ENCODE measurements at regions of chr12 and their contacts with region 1.

Region 1: DNA sequence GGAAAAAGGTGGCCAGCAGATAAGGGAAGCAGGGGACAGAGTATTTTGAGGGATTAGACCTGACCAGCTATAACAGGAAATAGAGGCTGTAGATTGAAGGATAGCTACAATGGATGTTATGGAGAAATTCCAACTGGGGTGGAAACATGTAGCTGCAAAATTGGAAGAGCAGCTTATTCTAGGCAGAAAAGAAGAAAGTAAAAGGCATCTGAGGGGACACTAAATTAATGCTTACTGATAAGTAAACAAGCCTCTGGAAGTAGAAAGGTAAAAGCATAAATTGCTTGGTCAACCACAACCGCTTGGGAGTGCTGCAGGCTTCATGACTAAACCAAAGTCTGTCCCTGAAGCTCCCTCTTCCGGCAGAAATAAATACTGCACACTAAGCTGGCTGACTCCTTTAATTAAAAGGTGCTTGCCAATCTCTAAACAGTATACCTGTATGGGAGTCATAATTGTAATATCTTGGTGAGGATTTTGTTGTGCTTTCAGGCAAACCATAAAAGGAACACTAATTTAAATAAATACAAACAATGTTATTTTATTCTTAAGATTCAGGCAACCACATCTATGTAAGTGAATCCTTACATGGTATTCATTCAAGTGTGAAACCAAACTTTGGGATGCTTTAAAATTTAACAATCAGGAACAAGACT is 7.7 kb downstream of the UBC start:
- DNase-seq: peak; percentile 56 to 98 (median 90)

Region 2: DNA sequence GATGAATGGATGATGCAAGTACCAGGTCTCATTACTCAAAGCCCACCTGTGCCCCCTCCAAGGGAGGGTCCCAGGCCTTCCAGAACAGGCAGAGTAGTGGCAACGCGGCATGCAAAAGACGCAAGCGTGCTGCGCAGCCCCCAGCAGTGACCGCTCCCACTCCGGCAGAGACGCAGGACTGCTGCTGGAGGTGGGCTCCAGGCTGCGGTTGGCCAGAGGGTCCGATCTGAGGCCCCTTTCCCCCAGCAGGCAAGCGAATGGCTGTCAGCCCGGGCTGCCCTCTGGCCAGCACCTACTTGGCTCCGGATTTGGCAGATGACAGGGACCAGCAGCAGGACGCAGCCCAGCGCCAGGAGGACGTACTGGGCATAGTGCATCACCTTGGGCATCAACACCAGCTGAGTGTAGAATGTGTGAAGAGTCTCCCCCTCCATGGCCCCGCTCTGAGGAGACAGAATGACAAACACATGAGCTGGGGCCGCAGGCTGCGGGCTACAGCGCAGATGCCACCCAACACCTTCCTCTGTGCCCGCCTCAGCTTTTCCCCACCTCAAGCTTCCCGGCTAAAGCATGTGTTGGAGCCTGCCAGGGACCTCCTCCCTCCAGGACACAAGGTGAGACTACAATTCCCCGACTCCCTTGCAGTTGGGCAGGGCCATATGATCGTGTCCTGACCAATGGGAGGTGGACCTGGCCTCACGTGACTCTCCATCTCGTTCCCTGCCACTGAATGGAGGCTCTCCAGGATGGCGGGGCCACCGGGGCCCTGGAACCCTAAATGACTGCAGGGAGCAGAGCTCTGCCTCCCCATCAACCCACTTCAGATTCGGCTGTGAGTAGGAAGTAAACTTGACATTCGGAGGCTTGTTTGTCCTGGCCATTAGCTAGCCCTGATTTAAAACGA is 120.4 kb before region 1 on chr12:
- intact Hi-C with region 1: loop called (anchors 10 kb)
- DNase-seq: peak; percentile 67 to 96 (median 89)

Region 3: DNA sequence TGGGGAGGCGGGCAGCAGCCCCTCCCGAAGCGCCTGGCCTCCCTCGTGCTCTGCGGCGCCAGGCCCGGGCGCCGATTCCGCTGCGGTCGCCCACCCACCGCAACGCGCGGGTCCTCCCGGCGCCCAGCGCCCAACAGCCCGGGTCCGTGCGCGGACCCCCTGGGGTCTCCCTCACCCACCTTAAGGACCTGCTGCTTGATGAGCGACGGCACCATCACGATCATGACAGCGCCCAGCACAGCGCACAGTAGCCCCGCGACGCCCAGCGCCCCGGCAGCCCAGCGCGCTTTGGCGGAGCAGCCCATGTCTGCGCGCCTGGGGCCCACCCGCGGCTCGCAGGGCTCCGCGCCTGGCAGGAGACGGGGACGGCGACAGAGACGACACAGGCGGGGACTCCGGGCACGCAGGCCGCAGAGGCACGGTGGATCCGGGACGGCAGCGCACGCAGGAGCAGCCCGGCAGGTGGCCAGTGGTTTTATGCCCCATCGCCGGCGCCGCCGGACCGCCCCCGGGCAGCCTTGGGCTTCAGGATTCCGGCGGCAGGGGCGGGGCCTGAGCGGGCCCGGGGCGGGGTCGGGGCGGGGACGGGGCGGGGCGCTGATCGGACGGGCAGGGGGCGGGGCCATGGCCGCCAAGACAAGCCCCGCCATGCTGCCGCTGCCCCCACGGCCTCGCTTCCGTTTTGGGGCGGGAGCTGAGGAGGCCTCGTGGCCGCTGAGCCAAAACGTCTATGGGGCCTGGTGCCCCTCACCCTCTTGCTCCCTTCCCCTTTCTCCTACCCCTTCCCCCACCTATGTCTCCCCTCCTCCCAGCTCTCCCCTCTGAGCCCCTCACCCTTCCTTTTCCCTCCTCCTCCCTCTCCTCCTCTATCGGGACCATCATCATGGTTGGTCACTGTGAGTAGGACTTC is 43.1 kb before region 1 on chr12 and contains the start of gene SCARB1:
- intact Hi-C with region 1: loop called (anchors 5 kb)
- DNase-seq: peak; percentile 69 to 94 (median 88)